ENCODE measurements at regions of chr14 and their contacts with region 1.

Region 1: DNA sequence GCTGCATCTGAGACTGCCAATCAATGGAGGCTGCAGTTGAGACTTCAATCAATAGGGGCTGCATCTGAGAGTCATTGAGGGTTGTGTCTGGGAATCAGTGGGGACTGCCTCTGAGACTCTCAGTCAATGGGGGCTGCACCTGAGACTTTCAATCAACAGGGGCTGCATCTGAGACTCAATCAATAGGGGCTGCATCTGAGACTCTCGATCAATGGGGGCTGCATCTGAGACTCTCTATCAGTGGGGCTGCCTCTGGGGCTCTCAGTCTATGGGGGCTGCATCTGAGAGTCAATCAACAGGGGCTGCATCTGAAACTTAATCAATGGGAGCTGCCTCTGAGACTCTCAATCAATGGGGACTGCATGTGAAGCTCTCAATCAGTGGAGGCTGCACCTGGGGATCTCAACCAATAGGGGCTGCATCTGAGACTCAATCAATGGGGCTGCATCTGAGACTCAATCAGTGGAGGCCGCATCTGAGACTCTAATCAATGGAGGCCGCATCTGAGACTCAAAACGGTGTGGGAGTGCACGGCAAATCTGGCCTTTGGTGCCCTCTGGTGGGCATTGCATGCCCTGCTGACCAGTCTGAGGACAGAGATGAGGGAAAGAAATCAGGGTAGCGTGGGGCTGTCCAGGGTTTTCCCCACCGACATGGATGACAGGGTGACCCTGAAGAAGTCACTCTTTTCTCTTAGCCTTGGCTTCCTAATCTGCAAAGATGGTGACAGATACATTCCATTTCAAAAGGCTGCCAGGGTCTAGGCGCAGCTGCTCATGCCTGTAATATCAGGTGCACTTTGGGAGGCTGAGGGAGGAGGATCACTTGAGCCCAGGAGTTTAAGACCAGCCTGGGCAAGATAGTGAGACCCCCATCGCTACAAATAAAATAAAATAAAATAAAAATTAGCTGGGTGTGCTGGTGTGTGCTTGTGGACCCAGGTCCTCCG is 41.3 kb upstream of the EIF5 start:
- DNase-seq: peak; percentile 84
- ATAC-seq: peak; percentile 80
- H3K4me3 ChIP-seq: no peak overlapping the region
- H3K27ac ChIP-seq: no peak overlapping the region
- H3K4me1 ChIP-seq: peaks cover 13% of the 10 kb centered on the region
- H3K27me3 ChIP-seq: no peaks in the 10 kb centered on the region
- CTCF ChIP-seq: peak; percentile 95

Region 2: DNA sequence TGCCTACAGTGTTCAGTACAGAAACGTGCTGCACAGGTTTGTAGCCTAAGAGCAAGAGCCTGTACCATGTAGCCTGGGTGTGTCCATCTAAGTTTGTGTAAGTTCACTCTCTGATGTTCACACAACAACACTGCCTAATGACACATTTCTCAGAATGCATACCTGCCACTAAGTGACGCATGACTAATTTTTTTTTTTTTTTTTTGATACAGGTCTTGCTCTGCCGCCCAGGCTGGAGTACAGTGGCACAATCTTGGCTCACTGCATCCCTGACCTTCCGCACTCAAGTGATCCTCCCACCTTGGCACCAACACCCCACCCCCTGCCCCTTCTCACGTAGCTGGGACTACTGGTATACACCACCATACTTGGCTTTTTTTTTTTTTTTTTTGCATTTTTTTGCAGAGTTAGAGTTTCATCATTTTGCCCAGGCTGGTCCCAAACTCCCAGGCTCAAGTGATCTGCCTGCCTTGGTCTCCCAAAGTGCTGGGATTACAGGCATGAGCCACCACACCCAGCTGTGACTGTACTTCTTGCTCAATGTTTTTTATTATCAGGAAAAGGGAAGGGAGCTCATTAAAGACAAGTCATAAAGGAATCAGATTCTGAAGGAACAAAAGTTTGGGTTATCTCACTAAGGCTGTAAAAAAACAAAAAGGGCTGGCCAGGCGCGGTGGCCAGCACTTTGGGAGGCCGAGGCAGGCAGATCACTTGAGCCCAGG is 225.3 kb before region 1 on chr14:
- CTCF ChIA-PET with region 1: no interaction called
- POLR2A ChIA-PET with region 1: no interaction called
- intact Hi-C with region 1: no loop called
- DNase-seq: peak; percentile 83
- ATAC-seq: peak; percentile 63
- H3K4me3 ChIP-seq: no peak overlapping the region
- H3K27ac ChIP-seq: peak overlapping the region; percentile 80
- H3K4me1 ChIP-seq: peaks cover 38% of the 10 kb centered on the region
- H3K27me3 ChIP-seq: no peaks in the 10 kb centered on the region
- CTCF ChIP-seq: no peak

Region 3: DNA sequence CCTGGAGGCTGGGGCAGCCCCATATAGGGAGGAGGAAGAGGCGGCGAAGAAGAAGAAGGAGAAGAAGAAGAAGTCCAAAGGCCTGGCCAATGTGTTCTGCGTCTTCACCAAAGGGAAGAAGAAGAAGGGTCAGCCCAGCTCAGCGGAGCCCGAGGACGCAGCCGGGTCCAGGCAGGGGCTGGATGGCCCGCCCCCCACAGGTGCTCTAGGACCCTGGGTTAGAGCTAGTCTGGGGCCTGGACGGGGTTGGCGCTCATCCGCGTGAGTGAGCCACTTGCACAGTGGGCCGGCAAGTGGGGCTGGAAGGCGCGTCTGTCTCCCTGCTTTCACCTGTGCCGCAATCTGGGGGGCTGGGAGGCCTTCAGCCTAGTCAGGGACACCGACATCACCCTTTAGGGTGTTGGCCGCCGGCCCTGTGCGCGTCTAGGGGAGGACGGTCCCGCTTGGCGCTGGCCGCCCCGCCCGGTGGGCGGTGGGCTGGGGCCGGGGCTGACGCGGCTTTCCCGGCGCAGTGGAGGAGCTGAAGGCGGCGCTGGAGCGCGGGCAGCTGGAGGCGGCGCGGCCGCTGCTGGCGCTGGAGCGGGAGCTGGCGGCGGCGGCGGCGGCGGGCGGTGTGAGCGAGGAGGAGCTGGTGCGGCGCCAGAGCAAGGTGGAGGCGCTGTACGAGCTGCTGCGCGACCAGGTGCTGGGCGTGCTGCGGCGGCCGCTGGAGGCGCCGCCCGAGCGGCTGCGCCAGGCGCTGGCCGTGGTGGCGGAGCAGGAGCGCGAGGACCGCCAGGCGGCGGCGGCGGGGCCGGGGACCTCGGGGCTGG is 166.0 kb before region 1 on chr14:
- CTCF ChIA-PET with region 1: interaction called, 3 read pairs
- POLR2A ChIA-PET with region 1: interaction called, 7 read pairs
- intact Hi-C with region 1: loop called (anchors 5 kb)
- DNase-seq: peak; percentile 70
- ATAC-seq: peak; percentile 49
- H3K4me3 ChIP-seq: peak overlapping the region; percentile 47; the same call in 1 of the 2 replicates
- H3K27ac ChIP-seq: no peak overlapping the region
- H3K4me1 ChIP-seq: peaks cover 72% of the 10 kb centered on the region
- H3K27me3 ChIP-seq: no peaks in the 10 kb centered on the region
- CTCF ChIP-seq: no peak

Region 4: DNA sequence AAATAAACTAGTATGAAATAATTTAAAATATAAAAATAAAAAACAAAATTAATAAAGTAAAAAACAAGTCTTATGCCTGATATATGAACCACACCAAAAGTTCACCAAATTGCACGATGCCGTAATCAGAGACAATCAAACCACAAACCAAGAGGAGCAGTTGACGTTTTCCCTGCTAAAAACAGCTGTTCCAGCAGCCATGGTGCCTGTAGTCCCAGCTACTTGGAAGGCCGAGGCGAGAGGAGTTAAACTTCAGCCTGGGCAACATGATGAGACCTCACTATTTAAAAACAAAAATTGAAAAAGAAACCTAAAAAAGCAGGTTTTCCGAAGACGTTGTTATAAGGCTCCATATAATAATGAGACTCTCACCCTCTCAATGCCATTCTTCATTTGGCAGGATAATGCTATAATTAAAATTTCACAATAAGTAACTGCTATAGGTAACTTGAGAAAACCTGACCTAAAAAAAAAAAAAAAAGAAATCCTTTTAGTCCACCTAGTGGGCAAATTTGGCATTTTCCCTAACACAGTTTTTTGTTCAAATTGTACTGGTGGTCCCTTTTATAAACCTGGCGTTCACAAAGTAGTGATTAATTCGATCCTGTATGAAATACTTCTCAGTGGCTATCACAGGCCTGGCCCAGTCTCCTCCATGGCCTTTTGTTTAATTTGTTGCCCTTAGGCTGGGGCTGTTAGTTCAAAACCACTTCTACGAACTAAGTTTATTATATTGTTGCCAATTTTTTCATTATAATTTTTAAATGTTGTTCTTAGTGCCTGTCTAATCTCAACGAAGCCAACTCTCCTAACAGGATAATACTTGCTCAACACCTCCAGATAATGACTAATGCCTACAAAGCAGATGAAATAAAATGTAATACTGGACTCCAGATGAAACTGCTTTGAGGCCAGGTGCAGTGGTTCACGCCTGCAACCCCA is 107.4 kb before region 1 on chr14:
- CTCF ChIA-PET with region 1: no interaction called
- POLR2A ChIA-PET with region 1: no interaction called
- intact Hi-C with region 1: loop called (anchors 5 kb)
- DNase-seq: peak; percentile 80
- ATAC-seq: no peak
- H3K4me3 ChIP-seq: no peak overlapping the region
- H3K27ac ChIP-seq: no peak overlapping the region
- H3K4me1 ChIP-seq: no peaks in the 10 kb centered on the region
- H3K27me3 ChIP-seq: no peaks in the 10 kb centered on the region
- CTCF ChIP-seq: peak; percentile 78

Region 5: GRCh38 chr14:103281496-103282231 is 11.0 kb before region 1 on chr14:
- CTCF ChIA-PET with region 1: no interaction called
- POLR2A ChIA-PET with region 1: no interaction called
- intact Hi-C with region 1: no loop called
- DNase-seq: peak; percentile 63
- ATAC-seq: peak; percentile 76
- H3K4me3 ChIP-seq: no peak overlapping the region
- H3K27ac ChIP-seq: no peak overlapping the region
- H3K4me1 ChIP-seq: peaks cover 8% of the 10 kb centered on the region
- H3K27me3 ChIP-seq: no peaks in the 10 kb centered on the region
- CTCF ChIP-seq: peak; percentile 54

Region 6: GRCh38 chr14:103315351-103315911 is 22.7 kb after region 1 on chr14:
- CTCF ChIA-PET with region 1: no interaction called
- POLR2A ChIA-PET with region 1: no interaction called
- intact Hi-C with region 1: no loop called
- DNase-seq: no peak
- ATAC-seq: no peak
- H3K4me3 ChIP-seq: no peak overlapping the region
- H3K27ac ChIP-seq: no peak overlapping the region
- H3K4me1 ChIP-seq: no peaks in the 10 kb centered on the region
- H3K27me3 ChIP-seq: no peaks in the 10 kb centered on the region
- CTCF ChIP-seq: no peak

Measured in PC-3 (cell line).